A673 (cell line): ENCODE measurements at regions of chr11 and their contacts with region 1.

Region 1: DNA sequence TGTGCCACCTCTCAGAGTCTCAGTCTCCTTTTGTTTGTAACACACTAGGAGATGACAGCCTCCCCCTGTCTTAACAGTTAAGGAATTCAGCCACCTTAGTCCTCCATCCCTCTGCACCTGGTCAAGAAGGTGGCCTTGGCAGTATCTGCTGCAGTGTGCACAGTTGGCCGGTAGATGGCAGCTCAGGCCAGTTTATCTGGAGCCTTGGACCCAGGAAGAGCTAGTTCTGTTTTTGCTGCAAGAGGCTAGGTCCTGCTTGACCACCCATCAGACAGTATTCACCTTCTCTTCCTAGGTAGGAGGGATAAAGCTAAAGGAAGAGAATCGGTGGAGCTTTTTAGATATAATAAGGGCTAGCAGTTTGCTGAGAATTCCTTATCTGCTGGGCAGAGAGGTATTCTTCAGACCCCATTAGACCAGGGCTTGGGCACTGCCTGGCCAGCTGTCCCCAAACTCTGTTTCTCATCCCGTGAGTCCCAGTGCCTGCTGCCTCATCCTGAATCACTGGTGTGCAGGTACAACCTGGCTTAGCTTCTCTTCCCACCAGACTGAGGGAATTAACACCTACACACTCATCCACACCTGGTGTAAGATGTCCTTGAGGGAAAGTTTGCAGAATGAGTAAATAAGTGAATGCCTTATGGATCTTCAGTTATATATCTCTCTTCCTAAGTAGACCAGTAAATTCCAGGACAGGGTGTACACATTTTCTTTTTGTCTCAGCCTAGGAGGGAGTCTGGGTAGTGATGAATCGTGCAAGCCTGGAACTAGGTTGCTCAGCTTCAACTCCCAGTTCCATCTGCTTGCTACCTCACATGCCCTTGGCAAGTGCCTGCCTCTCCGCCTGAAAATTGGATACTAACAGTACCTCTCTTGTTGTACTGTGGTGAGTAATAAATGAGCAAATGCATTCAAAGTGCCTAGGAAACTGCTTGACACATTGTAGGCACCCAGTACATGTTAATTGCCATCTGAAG is 70.8 kb upstream of the NARS2 start:
- DNase-seq: peak; percentile 73
- H3K4me3 ChIP-seq: peak overlapping the region; percentile 17
- H3K27ac ChIP-seq: no peak overlapping the region
- H3K4me1 ChIP-seq: no peaks in the 10 kb centered on the region
- H3K27me3 ChIP-seq: peaks cover 12% of the 10 kb centered on the region
- CTCF ChIP-seq: peak; percentile 99

Region 2: DNA sequence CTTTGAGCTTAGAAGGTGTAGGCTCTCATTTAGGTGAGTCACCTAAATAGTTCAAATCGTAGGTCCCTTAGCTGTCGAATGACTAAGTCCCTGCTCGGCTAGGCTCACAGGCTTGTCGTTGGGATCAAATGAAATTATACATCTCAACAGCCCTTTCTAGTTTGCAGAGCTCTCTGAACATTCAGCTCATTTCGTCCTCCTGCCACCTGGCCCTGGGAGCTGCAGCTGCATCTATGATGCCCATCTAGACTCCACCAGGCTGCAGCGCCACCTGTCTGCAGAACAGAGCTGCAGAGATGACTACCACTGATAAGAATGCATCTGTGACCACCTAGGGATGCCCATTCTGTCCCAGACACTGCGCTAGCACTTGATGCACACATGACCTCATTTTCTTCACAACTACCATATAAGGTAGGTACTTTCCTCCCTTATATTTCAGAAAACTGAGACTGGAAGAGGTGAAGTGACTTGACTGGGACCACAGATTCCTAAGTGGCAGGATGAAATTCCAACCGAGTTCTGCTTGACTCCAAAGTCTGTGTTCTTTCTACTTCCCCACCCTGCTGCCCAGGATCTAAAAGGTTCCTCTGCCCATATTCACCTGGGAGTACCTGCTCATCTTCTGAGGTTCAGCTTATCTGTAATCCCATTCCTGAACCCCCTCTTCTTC is 70.3 kb after region 1 on chr11:
- CTCF ChIA-PET with region 1: interaction called, 35 read pairs
- POLR2A ChIA-PET with region 1: no interaction called
- intact Hi-C with region 1: loop called (anchors 1 kb)
- DNase-seq: peak; percentile 76
- H3K4me3 ChIP-seq: no peak overlapping the region
- H3K27ac ChIP-seq: no peak overlapping the region
- H3K4me1 ChIP-seq: no peaks in the 10 kb centered on the region
- H3K27me3 ChIP-seq: peaks cover 11% of the 10 kb centered on the region
- CTCF ChIP-seq: peak; percentile 97

Region 3: DNA sequence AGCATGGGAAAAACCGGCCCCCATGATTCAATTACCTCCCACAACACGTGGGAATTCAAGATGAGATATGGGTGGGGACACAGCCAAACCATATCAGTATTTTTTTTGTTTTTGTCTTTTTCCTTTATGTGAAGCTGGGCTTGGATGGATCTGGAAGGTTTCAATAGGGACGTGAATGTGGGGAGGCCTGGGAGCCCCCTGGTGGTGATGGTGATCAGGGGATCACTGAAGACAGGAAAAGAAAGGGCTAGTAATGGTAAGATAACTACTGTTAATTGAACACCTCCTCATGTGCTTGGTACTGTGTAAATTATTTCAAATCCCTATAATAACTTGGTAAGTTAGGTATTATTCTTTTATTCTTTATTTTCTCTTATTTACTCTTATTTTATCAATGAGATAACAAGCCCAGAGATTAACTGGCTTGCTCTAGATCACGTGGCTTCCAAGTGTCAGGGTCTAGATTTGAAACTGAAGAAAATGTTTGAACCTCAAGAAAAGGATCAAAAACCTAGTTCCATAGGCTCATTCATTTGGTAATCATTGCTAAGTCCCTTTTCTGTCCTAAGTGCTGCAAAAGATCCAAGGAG is 431.1 kb after region 1 on chr11:
- CTCF ChIA-PET with region 1: interaction called, 10 read pairs
- POLR2A ChIA-PET with region 1: no interaction called
- intact Hi-C with region 1: loop called (anchors 1 kb)
- DNase-seq: peak; percentile 61
- H3K4me3 ChIP-seq: no peak overlapping the region
- H3K27ac ChIP-seq: no peak overlapping the region
- H3K4me1 ChIP-seq: no peaks in the 10 kb centered on the region
- H3K27me3 ChIP-seq: no peaks in the 10 kb centered on the region
- CTCF ChIP-seq: peak; percentile 81

Region 4: GRCh38 chr11:79100093-79100910 is 454.8 kb after region 1 on chr11:
- CTCF ChIA-PET with region 1: interaction called, 35 read pairs
- POLR2A ChIA-PET with region 1: no interaction called
- intact Hi-C with region 1: loop called (anchors 5 kb)
- DNase-seq: peak; percentile 75
- H3K4me3 ChIP-seq: no peak overlapping the region
- H3K27ac ChIP-seq: no peak overlapping the region
- H3K4me1 ChIP-seq: no peaks in the 10 kb centered on the region
- H3K27me3 ChIP-seq: peaks cover 3% of the 10 kb centered on the region
- CTCF ChIP-seq: peak; percentile 85

Region 5: DNA sequence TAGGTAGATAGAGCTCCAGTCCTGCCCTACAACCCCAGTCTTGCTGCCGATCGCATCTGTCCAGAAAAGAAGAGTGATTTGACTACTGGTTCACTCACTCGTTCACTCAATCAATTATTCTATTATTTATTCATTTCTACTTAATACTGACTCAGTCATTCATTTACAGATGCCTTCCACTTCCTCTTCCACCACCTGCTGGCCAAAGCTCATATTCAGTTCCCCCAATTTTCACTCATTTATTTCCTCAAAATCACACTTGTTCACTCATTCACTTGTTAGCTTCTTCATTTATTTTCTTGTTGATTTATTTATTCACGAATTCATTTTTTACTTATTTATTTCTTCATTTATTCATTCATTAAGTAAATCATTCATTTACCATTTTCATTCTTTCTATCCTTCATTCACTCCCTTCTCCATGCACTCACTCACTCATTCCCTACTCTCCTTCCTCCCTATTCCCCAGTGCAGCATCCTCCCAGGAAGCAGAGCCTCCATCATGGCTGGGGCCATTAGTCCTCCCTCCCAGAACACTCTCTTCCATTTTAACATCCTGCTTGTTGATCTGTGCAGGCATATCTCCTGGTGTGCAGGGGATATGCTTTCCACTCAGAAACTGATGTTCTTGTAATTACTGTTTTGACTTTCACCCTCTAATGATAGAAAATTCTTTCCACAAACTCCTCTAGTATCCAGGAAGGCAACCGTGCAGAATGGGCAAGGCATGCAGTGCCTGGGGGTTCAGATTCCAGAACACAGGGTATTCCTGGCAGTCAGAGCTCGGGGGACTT is 514.3 kb after region 1 on chr11:
- CTCF ChIA-PET with region 1: interaction called, 4 read pairs
- POLR2A ChIA-PET with region 1: no interaction called
- intact Hi-C with region 1: loop called (anchors 5 kb)
- DNase-seq: no peak
- H3K4me3 ChIP-seq: no peak overlapping the region
- H3K27ac ChIP-seq: no peak overlapping the region
- H3K4me1 ChIP-seq: no peaks in the 10 kb centered on the region
- H3K27me3 ChIP-seq: no peaks in the 10 kb centered on the region
- CTCF ChIP-seq: no peak; the same call in 1 of the 2 replicates

Region 6: GRCh38 chr11:79493555-79494171 is 848.1 kb after region 1 on chr11:
- CTCF ChIA-PET with region 1: no interaction called
- POLR2A ChIA-PET with region 1: no interaction called
- intact Hi-C with region 1: loop called (anchors 2 kb)
- DNase-seq: peak; percentile 73
- H3K4me3 ChIP-seq: no peak overlapping the region
- H3K27ac ChIP-seq: no peak overlapping the region
- H3K4me1 ChIP-seq: no peaks in the 10 kb centered on the region
- H3K27me3 ChIP-seq: no peaks in the 10 kb centered on the region
- CTCF ChIP-seq: peak; percentile 95

Region 7: GRCh38 chr11:80155412-80156017 is 1510.0 kb after region 1 on chr11:
- CTCF ChIA-PET with region 1: no interaction called
- POLR2A ChIA-PET with region 1: no interaction called
- intact Hi-C with region 1: loop called (anchors 5 kb)
- DNase-seq: peak; percentile 76
- H3K4me3 ChIP-seq: no peak overlapping the region
- H3K27ac ChIP-seq: no peak overlapping the region
- H3K4me1 ChIP-seq: no peaks in the 10 kb centered on the region
- H3K27me3 ChIP-seq: no peaks in the 10 kb centered on the region
- CTCF ChIP-seq: peak; percentile 77